PC-3 (cell line): ENCODE measurements at regions of chr9 and their contacts with region 1.

Region 1: GRCh38 chr9:35954942-35955546 is 2.9 kb downstream of the OR2S2 start:
- DNase-seq: peak; percentile 79
- ATAC-seq: peak; percentile 93
- H3K4me3 ChIP-seq: peak overlapping the region; percentile 57
- H3K27ac ChIP-seq: no peak overlapping the region
- H3K4me1 ChIP-seq: peaks cover 9% of the 10 kb centered on the region
- H3K27me3 ChIP-seq: no peaks in the 10 kb centered on the region
- CTCF ChIP-seq: peak; percentile 78

Region 2: GRCh38 chr9:35559792-35560530 is 395.1 kb before region 1 on chr9:
- CTCF ChIA-PET with region 1: interaction called, 11 read pairs
- POLR2A ChIA-PET with region 1: no interaction called
- intact Hi-C with region 1: no loop called
- DNase-seq: no peak
- ATAC-seq: no peak
- H3K4me3 ChIP-seq: no peak overlapping the region
- H3K27ac ChIP-seq: no peak overlapping the region
- H3K4me1 ChIP-seq: no peaks in the 10 kb centered on the region
- H3K27me3 ChIP-seq: no peaks in the 10 kb centered on the region
- CTCF ChIP-seq: no peak

Region 3: DNA sequence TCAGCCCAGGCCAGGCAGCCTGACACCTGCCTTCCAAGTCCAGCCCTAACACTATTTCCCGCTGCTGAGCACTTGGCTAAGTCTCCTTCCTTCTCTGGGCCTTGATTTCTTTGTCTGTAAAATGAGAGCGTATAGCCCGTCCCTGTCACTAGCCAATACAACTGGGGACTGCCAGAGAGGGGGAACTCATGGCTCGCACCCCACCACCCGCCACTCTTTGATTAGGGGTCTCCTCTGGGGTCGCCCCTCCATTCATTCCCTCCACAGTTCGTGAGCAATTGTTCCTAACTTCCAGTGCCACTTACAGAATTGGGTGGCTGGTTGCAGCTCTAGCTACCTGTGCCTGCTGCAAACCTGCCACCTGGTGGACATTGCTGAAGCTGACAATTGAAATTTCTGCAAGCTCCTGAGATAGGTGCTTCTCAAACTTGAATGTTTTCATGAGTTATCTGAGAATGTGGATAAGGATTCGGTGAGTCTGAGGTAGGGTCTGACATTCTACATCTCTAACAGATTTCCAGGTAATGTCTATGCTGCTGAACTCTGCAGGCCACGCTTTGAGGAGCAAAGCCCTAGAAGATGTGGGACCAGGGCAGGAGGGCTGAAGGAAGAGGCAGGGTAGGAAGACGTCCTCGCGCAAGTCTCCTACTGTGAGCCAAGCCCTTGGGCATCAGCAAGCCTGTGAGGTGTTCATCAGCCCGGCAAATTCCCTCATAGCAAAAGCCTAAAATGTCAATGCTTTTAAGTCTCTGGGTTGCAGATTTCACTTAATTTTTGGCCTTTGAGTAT is 68.4 kb after region 1 on chr9:
- CTCF ChIA-PET with region 1: interaction called, 6 read pairs
- POLR2A ChIA-PET with region 1: interaction called, 4 read pairs
- intact Hi-C with region 1: loop called (anchors 1 kb)
- DNase-seq: peak; percentile 75
- ATAC-seq: peak; percentile 78
- H3K4me3 ChIP-seq: no peak overlapping the region
- H3K27ac ChIP-seq: no peak overlapping the region
- H3K4me1 ChIP-seq: no peaks in the 10 kb centered on the region
- H3K27me3 ChIP-seq: no peaks in the 10 kb centered on the region
- CTCF ChIP-seq: peak; percentile 82